ENCODE measurements at regions of chr15 and their contacts with region 1.

Region 1: DNA sequence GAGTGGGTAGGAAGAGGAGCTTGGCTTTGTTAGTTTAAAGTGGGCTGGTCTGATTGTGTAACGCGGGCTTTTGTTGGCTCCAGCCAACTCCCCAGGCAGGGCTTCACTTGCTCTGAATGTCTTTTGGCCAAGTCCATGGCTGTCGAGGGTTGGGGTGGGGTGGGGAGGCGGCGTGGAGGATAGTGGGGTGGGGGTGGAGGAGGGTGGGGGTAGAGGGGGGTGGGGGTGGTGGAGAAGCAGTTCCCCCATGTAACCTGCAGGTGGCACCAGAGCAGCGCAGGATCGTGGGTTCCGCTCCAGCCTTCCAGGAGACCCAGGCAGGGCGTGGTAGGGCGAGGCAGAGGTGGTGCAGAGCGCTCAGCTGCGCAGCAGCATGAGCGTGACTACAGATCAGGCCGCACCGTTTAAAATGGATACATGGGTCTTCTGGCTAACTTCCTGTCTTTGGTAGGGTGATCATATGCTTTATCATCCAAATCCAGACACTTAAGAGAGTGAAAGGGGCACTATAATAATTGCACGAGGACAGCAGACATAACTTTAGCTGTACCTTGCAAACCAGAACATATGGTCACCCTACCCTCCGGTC is 28.3 kb downstream of the GOLGA6A start:
- DNase-seq: peak; percentile 50 to 75
- ATAC-seq: peak; percentile 73 to 77
- H3K4me3 ChIP-seq: no peak overlapping the region
- H3K27ac ChIP-seq: no peak overlapping the region
- H3K4me1 ChIP-seq: peaks cover 7 to 14% of the 10 kb centered on the region in 2 donors
- H3K27me3 ChIP-seq: no peaks in the 10 kb centered on the region
- CTCF ChIP-seq: peak in 3 of 5 experiments; percentile 34 to 73 (median 60)
- POLR2A ChIP-seq: no peak

Region 2: GRCh38 chr15:74307827-74308644 is 254.0 kb after region 1 on chr15:
- in situ Hi-C with region 1: loop called in 1 of 4 experiments (anchors 10 kb)
- intact Hi-C with region 1: no loop called
- DNase-seq: peak in 1 of 2 donors; percentile 35
- ATAC-seq: peak; percentile 64 to 83
- H3K4me3 ChIP-seq: no peak overlapping the region
- H3K27ac ChIP-seq: no peak overlapping the region
- H3K4me1 ChIP-seq: no peaks in the 10 kb centered on the region
- H3K27me3 ChIP-seq: peaks cover 6 to 10% (median 10%) of the 10 kb centered on the region in 3 donors
- CTCF ChIP-seq: peak; percentile 30 to 82 (median 66)
- POLR2A ChIP-seq: no peak

Measured in gastrocnemius medialis (tissue), 4 donors.